ENCODE measurements at regions of chr9 and their contacts with region 1.

Region 1: DNA sequence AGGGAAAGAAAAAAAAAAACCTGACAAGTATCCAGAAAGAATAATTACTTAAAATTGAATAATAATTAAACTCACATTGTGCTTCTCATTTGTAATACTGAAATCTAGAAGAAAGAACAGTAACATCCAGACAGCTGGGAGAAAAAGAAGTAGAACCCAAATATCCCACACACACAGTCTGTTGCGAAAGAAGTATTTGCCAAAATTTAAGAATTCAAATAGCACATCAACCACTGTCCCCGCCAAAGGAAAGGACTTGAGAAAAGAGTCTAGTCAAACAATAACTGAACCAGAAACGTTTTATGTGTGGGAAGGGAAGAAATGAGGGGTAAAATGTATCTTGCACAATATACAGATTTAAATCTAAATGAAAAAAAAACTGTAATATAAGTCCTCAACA is 202.8 kb downstream of the MLLT3 start:
- DNase-seq: no peak
- H3K4me3 ChIP-seq: no peak overlapping the region
- H3K27ac ChIP-seq: no peak overlapping the region
- H3K4me1 ChIP-seq: no peaks in the 10 kb centered on the region
- H3K27me3 ChIP-seq: no peaks in the 10 kb centered on the region
- CTCF ChIP-seq: no peak
- POLR2A ChIP-seq: no peak

Region 2: DNA sequence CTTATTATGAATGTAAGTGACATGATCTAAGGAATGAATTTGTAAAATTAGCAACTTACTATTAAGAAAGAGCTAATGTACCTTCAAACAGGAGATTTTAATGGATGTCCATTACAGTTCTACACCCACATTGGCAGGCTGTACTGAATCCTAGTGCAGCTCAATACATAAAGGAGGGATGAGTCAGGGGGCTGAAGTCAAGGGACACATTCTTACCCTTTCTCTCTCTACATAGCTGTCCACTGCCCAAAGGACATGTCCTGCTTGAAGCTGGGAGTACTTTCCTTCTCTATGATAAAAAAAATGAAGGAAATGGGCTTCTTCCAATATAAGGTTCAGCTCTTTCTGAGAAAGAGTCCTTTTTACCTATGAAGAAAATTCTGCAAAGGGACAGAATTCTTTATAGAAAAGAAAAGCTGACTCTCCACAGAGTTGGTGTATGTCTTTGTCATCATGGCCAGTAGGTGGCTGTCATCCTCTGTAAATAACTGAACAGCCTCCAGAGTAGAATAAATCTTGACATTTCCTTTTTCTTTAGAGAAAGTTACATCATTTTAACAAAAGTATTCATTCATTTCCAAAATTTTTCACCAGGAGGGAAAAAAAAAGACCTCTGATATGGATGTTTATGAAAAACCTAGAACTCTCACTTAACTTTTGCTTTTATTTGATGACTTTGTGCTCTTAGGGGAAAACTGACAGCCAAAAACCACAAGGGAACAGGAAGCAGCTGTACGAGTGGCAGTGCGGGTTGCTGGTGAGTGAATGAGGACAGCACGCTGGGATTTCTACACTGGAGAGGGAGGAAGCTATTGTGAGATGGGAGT is 833.4 kb after region 1 on chr9:
- intact Hi-C with region 1: loop called (anchors 10 kb)
- DNase-seq: no peak
- H3K4me3 ChIP-seq: no peak overlapping the region
- H3K27ac ChIP-seq: no peak overlapping the region
- H3K4me1 ChIP-seq: no peaks in the 10 kb centered on the region
- H3K27me3 ChIP-seq: no peaks in the 10 kb centered on the region
- CTCF ChIP-seq: peak; percentile 50 to 62 (median 52)
- POLR2A ChIP-seq: no peak